Dorsolateral prefrontal cortex (tissue), 120 donors: ENCODE measurements at regions of chr18 and their contacts with region 1.

Region 1: DNA sequence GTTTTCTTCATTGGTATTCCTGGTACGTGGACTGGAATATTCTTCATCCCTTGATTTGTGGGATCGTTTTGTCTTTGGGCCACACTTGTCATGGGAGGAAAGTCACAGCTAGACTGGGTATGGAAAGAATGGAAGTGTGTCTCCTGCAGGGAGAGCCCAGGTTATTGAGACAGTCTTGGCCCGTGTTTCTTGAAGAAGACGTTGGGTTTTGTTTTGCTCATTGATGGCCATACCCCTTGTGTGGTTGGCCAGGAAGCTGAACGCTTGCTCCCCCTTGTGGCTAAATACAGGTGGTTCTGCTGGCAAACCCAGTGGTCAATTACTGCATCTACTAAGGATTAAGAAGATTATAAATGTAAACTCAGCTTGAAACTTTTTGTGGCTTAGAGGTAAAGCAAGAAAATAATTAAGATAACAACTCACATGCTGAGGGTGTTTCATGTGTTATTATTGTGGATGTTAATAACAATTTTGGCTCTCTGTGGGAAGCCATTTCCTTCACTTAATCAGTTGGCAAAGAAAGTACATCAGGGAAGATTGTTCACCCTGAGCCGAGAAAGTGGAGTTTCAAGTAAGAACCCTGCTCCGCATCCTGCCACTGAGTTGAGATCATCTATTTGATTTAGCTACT is 91.8 kb downstream of the NEDD4L start:
- DNase-seq: peak in 8 of 10 donors; percentile 40 to 75 (median 58)
- H3K4me3 ChIP-seq: peak overlapping the region in 15 of 59 donors; percentile 3 to 45 (median 28)
- H3K27ac ChIP-seq: peak overlapping the region in 1 of 59 donors; percentile 24
- H3K27me3 ChIP-seq: peaks cover 0 to 6% (median 0%) of the 10 kb centered on the region in 45 donors
- CTCF ChIP-seq: peak; percentile 64 to 93 (median 86)

Region 2: DNA sequence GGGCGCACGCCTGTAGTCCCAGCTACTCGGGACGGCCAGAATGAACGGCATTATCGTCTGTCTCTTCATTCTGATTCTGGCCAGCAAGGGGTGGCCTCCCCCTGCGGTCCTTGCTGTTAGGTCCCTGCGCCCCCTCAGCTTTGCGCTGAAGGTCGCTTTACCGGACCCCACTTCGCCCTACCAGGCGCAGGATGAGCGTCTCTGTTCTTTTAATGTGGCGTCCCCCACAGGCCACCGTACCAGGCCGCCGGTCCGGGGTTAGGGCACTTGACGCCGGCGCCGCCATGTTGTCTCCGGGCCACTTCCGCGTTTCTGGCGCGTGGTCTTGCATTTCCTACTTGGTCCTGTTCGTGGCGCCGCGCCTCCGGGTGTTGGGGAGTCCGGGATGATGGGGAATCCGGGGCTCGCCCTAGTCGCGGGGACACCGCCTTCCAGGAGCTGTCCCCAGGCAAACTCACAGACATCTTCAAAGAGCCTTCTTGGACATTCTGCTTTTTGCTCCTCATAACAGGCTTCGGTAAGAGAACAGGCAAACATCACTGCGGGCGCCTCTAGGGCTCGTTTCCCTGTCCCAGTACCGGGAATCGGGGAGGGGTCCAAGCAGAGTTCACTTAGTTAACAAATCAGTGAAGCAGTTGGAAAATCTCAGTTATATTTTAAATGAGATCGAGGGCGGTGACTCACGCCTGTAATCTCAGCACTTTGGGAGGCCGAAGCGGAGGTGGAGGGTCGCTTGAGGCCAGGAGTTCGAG is 505.6 kb before region 1 on chr18:
- intact Hi-C with region 1: loop called in 1 of 2 experiments (anchors 10 kb)
- DNase-seq: peak; percentile 95 to 98 (median 96)
- H3K4me3 ChIP-seq: peak overlapping the region; percentile 48 to 98 (median 79)
- H3K27ac ChIP-seq: peak overlapping the region; percentile 14 to 97 (median 86)
- H3K27me3 ChIP-seq: no peaks in the 10 kb centered on the region
- CTCF ChIP-seq: peak; percentile 38 to 90 (median 81)

Region 3: GRCh38 chr18:58076052-58076451 is 59.8 kb before region 1 on chr18:
- intact Hi-C with region 1: no loop called
- DNase-seq: no peak
- H3K4me3 ChIP-seq: no peak overlapping the region
- H3K27ac ChIP-seq: no peak overlapping the region
- H3K27me3 ChIP-seq: peaks cover 0 to 12% (median 0%) of the 10 kb centered on the region in 45 donors
- CTCF ChIP-seq: no peak

Region 4: DNA sequence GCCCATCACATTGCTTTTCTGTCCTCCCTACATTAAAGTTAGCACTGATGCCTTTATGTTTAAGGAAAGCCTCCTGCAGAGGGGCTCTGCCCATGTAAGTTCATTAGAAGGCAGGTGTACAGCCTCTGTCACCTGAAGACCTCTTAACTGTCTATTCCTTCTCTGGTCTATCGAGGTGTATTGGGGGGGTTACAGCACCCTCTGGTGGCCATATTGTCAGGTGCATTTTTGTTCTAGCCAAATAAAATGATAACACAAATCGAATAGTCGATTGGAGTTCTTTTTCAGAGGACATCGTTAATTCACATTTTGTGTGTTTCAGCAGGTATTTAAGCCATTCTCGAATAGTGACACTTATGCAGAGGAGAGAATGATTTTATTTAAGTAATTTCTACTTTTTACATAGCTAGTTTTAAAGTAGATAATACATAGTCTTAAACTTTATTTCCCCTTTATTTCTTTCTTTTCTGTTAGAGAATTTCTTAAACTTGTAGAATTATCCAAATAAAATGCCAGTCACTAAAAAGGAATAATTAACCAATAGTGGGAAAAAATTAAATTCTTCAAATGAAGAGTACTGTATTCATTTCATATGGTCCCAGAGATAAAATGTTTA is 45.0 kb after region 1 on chr18:
- intact Hi-C with region 1: loop called in 1 of 2 experiments (anchors 5 kb)
- DNase-seq: peak in 3 of 10 donors; percentile 61 to 68 (median 65)
- H3K4me3 ChIP-seq: no peak overlapping the region
- H3K27ac ChIP-seq: no peak overlapping the region
- H3K27me3 ChIP-seq: no peaks in the 10 kb centered on the region
- CTCF ChIP-seq: peak; percentile 62 to 93 (median 82)

Region 5: DNA sequence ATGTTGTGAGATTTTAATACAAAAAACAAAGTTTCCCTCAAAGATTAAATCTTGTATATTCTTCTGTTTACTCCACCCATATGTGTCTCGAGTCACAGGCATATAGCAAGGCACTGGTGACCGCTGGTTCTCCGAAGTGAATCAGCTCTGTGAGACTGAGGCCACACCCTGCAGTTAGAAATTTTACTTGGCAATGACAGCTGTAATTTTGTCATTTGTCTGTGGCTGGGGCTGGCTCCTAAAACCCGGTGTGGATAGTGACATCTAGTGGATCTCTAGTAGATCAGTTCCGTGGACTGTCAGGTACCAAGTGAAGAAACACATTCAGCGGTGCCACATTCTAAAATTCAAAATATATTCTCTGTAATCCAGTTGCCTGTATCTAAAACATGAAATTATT is 186.2 kb after region 1 on chr18:
- intact Hi-C with region 1: loop called in 1 of 2 experiments (anchors 5 kb)
- DNase-seq: peak in 6 of 10 donors; percentile 40 to 68 (median 56)
- H3K4me3 ChIP-seq: peak overlapping the region in 7 of 59 donors; percentile 1 to 28 (median 14)
- H3K27ac ChIP-seq: peak overlapping the region in 4 of 59 donors; percentile 1 to 42 (median 25)
- H3K27me3 ChIP-seq: no peaks in the 10 kb centered on the region
- CTCF ChIP-seq: peak in 55 of 56 donors; percentile 23 to 75 (median 63)

Region 6: GRCh38 chr18:58761241-58761969 is 625.6 kb after region 1 on chr18:
- intact Hi-C with region 1: loop called in 1 of 2 experiments (anchors 5 kb)
- DNase-seq: no peak
- H3K4me3 ChIP-seq: no peak overlapping the region
- H3K27ac ChIP-seq: no peak overlapping the region
- H3K27me3 ChIP-seq: peaks cover 0 to 15% (median 0%) of the 10 kb centered on the region in 45 donors
- CTCF ChIP-seq: no peak